Esophagus squamous epithelium (tissue), 5 donors: ENCODE measurements at regions of chr18 and their contacts with region 1.

Region 1: DNA sequence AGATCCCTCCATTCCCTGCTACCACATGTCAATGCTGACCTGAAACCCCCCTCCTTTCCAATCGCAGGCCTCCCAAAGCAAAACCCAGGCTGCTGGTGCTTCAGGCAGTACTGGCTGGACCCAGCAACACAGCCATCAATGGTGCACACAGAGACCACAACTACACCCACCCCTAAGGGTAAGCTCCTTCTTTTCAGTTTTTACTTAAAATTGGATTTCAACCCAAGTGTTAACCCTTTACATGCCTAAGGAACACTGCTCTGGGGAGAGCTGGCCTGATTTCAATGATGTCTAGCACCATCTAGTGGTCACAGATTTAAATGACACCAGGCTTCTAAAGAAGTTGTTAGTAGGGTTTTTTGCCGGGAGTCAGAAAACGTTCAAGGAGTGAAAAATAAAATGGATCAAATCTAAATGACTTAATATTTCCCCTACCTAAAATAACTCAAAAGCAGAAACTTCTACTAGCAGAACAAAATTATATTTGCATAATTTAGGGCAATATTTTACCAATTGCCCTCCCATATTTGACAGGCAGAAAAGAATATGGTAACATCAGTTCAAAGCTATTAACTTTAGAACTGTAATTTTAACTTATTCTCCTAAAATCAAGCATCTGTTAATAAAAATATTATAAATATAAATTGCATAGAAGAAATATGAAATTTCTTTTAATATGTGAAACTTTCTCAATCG is 24.6 kb downstream of the FECH start:
- DNase-seq: no peak
- H3K4me3 ChIP-seq: no peak overlapping the region
- H3K27ac ChIP-seq: no peak overlapping the region
- H3K4me1 ChIP-seq: no peaks in the 10 kb centered on the region
- H3K27me3 ChIP-seq: no peaks in the 10 kb centered on the region
- CTCF ChIP-seq: peak; percentile 50 to 76 (median 71)
- POLR2A ChIP-seq: no peak

Region 2: GRCh38 chr18:56748698-56749268 is 813.1 kb before region 1 on chr18:
- intact Hi-C with region 1: loop called (anchors 10 kb)
- DNase-seq: no peak
- H3K4me3 ChIP-seq: no peak overlapping the region
- H3K27ac ChIP-seq: no peak overlapping the region
- H3K4me1 ChIP-seq: no peaks in the 10 kb centered on the region
- H3K27me3 ChIP-seq: no peaks in the 10 kb centered on the region
- CTCF ChIP-seq: peak in 4 of 6 experiments; percentile 39 to 59 (median 46)
- POLR2A ChIP-seq: no peak